ENCODE measurements at regions of chr1 and their contacts with region 1.

Region 1: DNA sequence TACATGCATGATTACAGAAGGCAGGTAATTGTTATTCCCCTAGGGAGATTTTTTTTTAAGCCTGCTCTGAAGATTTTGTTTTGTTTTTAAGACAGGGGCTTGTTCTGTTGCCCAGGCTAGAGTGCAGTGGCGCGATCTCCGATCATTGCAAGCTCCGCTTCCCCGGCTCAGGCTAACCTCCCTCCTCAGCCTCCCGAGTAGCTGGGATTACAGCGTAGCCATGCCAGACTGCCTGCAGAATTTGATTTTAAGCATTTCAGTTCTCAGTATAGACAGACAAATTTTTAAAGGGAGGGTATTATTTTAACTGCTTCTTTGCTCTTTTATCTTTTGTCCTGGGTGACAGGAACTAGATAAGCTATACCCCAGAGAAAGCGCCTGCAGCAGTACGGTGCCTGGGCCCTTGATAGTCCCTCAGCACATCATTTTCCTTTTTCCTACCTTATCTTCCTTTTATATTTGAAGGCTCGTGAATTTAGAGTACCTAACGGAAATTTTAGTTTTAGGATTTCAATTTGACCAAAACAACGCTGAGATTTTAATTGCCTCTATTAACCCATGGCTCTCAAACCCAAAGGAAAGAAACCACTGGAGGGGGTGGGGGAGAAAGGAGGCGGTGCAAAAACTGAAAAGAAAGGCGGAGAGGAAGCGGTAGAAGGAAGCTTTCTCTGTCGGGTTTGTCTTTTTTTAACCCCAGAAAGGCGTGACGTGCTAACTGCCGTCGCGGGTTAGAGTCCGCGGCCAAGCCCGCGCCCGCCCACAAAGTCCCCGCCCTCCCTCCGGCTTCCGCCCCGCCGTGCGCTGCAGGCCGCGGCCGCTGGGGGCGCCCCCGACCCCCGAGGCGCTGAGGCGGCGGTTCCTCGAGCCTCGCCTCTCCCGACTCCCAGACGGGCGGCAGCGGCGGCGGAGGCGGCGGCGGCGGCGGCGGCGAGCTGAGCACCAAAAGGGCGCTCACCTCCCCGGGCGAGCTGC is at the start of gene EEIG2:
- DNase-seq: peak; percentile 85 to 95 (median 95)
- ATAC-seq: peak; percentile 96
- H3K4me3 ChIP-seq: peak within 1 kb of the TSS; percentile 90
- H3K27ac ChIP-seq: peak within 1 kb of the TSS; percentile 21
- H3K4me1 ChIP-seq: no peaks in the 10 kb centered on the region
- H3K27me3 ChIP-seq: no peaks in the 10 kb centered on the region
- total RNA-seq, gene EEIG2: 5.0 to 9.8 (median 7.2) TPM

Region 2: DNA sequence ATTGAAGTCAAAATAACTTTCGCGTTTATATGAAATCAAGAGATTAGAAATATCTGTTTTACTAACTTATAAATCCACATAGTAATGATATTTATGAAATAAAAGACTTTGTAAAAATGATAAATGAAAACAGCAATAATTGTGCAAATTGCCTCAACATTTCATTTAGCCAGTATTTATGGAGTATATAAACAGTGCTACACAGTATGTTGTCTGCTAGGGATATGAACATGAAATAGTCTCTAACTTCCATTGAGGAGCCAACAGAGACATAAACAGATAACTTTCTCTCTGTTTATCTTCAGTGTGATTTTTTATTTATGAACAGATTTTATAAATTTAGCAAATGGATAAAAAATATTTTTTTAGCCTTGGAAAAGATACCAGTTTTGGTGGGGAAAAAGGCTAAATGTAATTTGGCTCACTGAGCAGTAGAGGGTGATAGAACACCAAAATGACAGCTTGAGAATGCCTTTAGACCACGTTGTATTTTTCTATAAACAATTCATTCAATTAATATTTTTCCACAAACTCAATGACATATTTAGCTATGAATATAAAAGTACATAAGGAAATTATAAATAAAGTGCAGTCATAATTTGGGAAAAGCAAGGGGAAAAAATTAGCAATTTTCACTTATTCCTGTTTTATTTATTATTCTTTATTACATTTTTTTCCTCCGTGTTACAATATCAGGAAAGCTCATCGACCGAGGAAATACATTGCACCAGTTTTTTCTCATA is 47.1 kb before region 1 on chr1:
- intact Hi-C with region 1: loop called in 1 of 4 experiments (anchors 5 kb)
- DNase-seq: no peak
- ATAC-seq: no peak
- H3K4me3 ChIP-seq: no peak overlapping the region
- H3K27ac ChIP-seq: no peak overlapping the region
- H3K4me1 ChIP-seq: no peaks in the 10 kb centered on the region
- H3K27me3 ChIP-seq: no peaks in the 10 kb centered on the region

Region 3: DNA sequence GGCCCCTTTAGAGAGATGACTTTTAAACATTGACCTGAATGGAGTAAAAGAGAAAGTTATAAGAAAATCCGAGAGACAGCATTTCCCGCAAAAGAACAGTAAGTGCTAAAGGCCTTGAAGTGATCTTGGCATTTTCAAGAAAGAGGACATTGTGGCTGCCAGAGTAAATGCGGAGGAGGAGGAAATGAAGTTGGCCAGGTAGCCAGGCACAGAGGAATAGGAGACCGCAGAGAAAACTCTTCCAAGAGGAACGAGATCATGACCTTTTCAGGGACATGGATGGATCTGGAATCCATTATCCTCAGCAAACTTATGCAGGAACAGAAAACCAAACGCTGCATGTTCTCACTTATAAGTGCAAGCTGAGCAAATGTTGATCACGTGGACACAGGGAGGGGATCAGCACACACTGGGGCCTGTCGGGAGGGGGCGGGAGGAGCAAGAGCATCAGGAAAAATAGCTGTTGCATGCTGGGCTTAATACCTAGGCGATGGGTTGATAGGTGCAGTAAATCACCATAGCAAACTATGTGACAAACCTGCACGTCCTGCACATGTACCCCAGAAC is 50.1 kb after region 1 on chr1:
- intact Hi-C with region 1: loop called in 1 of 4 experiments (anchors 10 kb)
- DNase-seq: no peak
- ATAC-seq: peak; percentile 60 to 68
- H3K4me3 ChIP-seq: no peak overlapping the region
- H3K27ac ChIP-seq: no peak overlapping the region
- H3K4me1 ChIP-seq: peaks cover 3% of the 10 kb centered on the region
- H3K27me3 ChIP-seq: no peaks in the 10 kb centered on the region

Region 4: DNA sequence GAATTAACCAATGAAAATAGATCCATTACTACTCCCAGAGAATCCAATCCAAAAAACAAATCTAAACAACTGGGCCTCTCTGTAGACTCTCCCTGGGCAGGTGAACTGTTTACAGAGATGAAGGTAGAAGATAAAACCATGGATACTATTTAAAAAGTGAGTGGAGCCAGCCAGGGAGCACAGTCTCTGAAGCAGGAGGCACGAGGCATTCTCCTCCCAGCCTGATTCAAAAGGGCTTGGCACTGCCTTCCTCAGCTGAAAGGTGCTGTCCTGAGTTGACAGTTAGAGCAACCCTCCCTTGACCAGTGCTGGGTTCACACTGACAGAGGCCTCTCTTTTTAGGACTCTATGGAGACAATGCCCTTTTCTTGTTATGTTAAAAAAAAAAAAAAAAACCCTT is 64.6 kb after region 1 on chr1:
- intact Hi-C with region 1: loop called in 2 of 4 experiments (anchors 10 kb)
- DNase-seq: no peak
- ATAC-seq: peak in 1 of 2 donors; percentile 52
- H3K4me3 ChIP-seq: no peak overlapping the region
- H3K27ac ChIP-seq: no peak overlapping the region
- H3K4me1 ChIP-seq: no peaks in the 10 kb centered on the region
- H3K27me3 ChIP-seq: no peaks in the 10 kb centered on the region

Region 5: GRCh38 chr1:108643492-108644335 is 84.2 kb after region 1 on chr1:
- intact Hi-C with region 1: loop called in 2 of 4 experiments (anchors 5 to 10 kb)
- DNase-seq: peak in 2 of 3 donors; percentile 23 to 50
- ATAC-seq: peak; percentile 60 to 72
- H3K4me3 ChIP-seq: no peak overlapping the region
- H3K27ac ChIP-seq: no peak overlapping the region
- H3K4me1 ChIP-seq: no peaks in the 10 kb centered on the region
- H3K27me3 ChIP-seq: no peaks in the 10 kb centered on the region